H1 (cell line): ENCODE measurements at regions of chr19 and their contacts with region 1.

Region 1: GRCh38 chr19:11639602-11640471 is 42.6 kb downstream of the ZNF627 start:
- DNase-seq: peak; percentile 85 to 99
- H3K4me3 ChIP-seq: peak overlapping the region; percentile 67 to 98 (median 88)
- H3K27ac ChIP-seq: peak overlapping the region; percentile 67; the same call in 1 of the 2 replicates
- H3K4me1 ChIP-seq: peaks cover 0 to 5% (median under 1%) of the 10 kb centered on the region in 4 experiments; a peak in 3 of 7 replicates
- H3K27me3 ChIP-seq: no peaks in the 10 kb centered on the region
- CTCF ChIP-seq: no peak
- EP300 ChIP-seq: no peak
- POLR2A ChIP-seq: peak in 1 of 2 experiments; percentile 80; a peak in 2 of 3 replicates
- RAD21 ChIP-seq: no peak

Region 2: GRCh38 chr19:11624069-11624463 is 15.8 kb before region 1 on chr19:
- CTCF ChIA-PET with region 1: interaction called, 5 read pairs
- POLR2A ChIA-PET with region 1: interaction called, 17 read pairs
- DNase-seq: no peak
- H3K4me3 ChIP-seq: peak overlapping the region in 2 of 4 experiments; percentile 42 to 59; a peak in 3 of 8 replicates
- H3K27ac ChIP-seq: no peak overlapping the region
- H3K4me1 ChIP-seq: peaks cover 0 to 4% (median 1%) of the 10 kb centered on the region in 4 experiments; a peak in 3 of 7 replicates
- H3K27me3 ChIP-seq: peaks cover 0 to 4% (median 2%) of the 10 kb centered on the region in 4 experiments; a peak in 3 of 7 replicates
- CTCF ChIP-seq: no peak
- EP300 ChIP-seq: no peak
- POLR2A ChIP-seq: no peak
- RAD21 ChIP-seq: no peak